Activated B cell treated with CpG ODN at 0.5 μM for 24 hours (primary cell): ENCODE measurements at regions of chr11 and their contacts with region 1.

Region 1: GRCh38 chr11:128579798-128580504 is 7.4 kb downstream of the ETS1 start:
- DNase-seq: no peak
- ATAC-seq: peak; percentile 79
- H3K4me3 Mint-ChIP-seq: no peak overlapping the region
- H3K27ac Mint-ChIP-seq: peak overlapping the region; percentile 13
- H3K4me1 Mint-ChIP-seq: peaks cover 42% of the 10 kb centered on the region
- H3K27me3 Mint-ChIP-seq: no peaks in the 10 kb centered on the region
- CTCF ChIP-seq: no peak

Region 2: GRCh38 chr11:128565881-128566280 is 14.1 kb before region 1 on chr11:
- CTCF ChIA-PET with region 1: no interaction called
- POLR2A ChIA-PET with region 1: interaction called, 10 read pairs
- intact Hi-C with region 1: loop called (anchors 1 kb)
- DNase-seq: no peak
- ATAC-seq: no peak
- H3K4me3 Mint-ChIP-seq: no peak overlapping the region
- H3K27ac Mint-ChIP-seq: peak overlapping the region; percentile 68
- H3K4me1 Mint-ChIP-seq: peaks cover 76% of the 10 kb centered on the region
- H3K27me3 Mint-ChIP-seq: no peaks in the 10 kb centered on the region
- CTCF ChIP-seq: no peak

Region 3: GRCh38 chr11:128595221-128595620 is 15.3 kb after region 1 on chr11:
- CTCF ChIA-PET with region 1: no interaction called
- POLR2A ChIA-PET with region 1: interaction called, 3 read pairs
- intact Hi-C with region 1: loop called (anchors 2 kb)
- DNase-seq: no peak
- ATAC-seq: no peak
- H3K4me3 Mint-ChIP-seq: no peak overlapping the region
- H3K27ac Mint-ChIP-seq: peak overlapping the region; percentile 75
- H3K4me1 Mint-ChIP-seq: peaks cover 52% of the 10 kb centered on the region
- H3K27me3 Mint-ChIP-seq: no peaks in the 10 kb centered on the region
- CTCF ChIP-seq: no peak